Naive thymus-derived CD4-positive, alpha-beta T cell (primary cell): ENCODE measurements at regions of chr6 and their contacts with region 1.

Region 1: DNA sequence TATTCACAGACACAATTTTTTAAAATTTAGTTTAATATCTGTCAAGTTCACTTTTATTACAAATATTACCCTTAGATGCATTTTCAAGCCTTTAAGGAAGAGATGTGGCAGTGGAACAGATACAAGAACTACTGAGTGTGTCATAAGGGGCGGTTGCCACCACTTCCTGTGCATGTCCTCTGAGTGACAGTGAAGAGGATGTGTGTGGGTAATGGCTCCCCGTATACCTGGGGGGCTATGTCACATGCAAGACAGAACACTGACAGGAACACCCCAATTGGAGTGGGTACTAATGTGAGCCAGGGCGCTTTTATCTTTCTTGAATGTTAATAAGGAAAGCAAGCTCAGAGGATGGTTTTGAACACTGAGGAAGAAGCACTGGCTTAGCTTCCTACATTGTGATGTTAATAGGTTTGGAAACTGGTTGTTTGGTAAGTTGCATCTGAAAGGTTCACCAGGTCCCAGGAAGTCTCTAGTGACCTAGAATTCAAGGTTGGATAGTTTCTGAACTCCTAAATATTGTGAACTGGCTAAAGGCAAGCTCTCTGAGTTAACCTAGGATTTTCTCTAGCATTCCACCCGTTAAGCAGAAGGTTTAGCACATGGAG is 83.4 kb upstream of the ASF1A start:
- DNase-seq: peak in 8 of 9 donors; percentile 35 to 80 (median 74)
- ATAC-seq: peak; percentile 93
- H3K4me3 ChIP-seq: peak overlapping the region; percentile 12
- H3K4me3 Mint-ChIP-seq: peak overlapping the region; percentile 54 to 87 (median 77)
- H3K27ac ChIP-seq: peak overlapping the region; percentile 45
- H3K27ac Mint-ChIP-seq: peak overlapping the region; percentile 85 to 97 (median 93)
- H3K4me1 ChIP-seq: peaks cover 23 to 31% of the 10 kb centered on the region in 2 donors
- H3K4me1 Mint-ChIP-seq: peaks cover 34 to 63% (median 51%) of the 10 kb centered on the region in 7 donors
- H3K27me3 ChIP-seq: no peaks in the 10 kb centered on the region
- H3K27me3 Mint-ChIP-seq: no peaks in the 10 kb centered on the region

Region 2: DNA sequence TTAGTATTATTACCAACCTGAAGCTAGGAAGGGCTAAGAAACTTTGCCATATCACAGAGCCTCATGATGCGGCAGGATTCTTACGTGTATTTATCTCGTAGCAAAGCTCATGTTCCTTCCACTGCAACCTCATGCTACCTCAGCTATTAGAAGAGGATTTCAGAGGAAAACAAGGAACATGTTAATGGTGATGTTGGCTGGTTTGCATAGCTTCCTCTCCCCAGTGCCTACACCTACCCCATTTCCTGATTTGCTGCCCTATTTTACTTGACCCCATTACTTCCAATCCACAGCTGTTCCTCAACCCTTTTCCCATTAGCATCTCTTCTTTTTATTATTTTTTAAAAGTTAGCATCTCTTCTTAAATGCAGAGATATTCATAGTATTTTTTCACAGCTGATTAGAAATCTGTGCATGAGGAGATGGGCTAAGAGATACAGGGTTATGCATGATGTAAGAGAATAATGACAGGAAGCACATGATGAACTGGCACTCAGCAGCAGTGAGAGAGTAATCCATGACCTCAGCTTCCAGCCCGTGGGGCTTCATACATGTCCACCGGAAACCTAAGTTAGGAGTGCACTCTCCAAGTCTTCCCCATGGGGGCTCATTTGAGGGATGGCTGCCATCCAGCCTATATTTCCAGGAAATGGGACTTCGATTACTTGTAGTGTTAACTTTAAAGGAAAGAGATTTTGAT is 22.6 kb before region 1 on chr6:
- CTCF ChIA-PET with region 1: no interaction called
- POLR2A ChIA-PET with region 1: no interaction called
- intact Hi-C with region 1: no loop called
- DNase-seq: peak in 1 of 9 donors; percentile 26
- ATAC-seq: peak; percentile 85
- H3K4me3 ChIP-seq: no peak overlapping the region
- H3K4me3 Mint-ChIP-seq: peak overlapping the region in 4 of 10 donors; percentile 1 to 51 (median 33)
- H3K27ac ChIP-seq: no peak overlapping the region
- H3K27ac Mint-ChIP-seq: peak overlapping the region; percentile 44 to 89 (median 78)
- H3K4me1 ChIP-seq: peaks cover 12% of the 10 kb centered on the region in 2 donors
- H3K4me1 Mint-ChIP-seq: peaks cover 11 to 29% (median 25%) of the 10 kb centered on the region in 7 donors
- H3K27me3 ChIP-seq: no peaks in the 10 kb centered on the region
- H3K27me3 Mint-ChIP-seq: peaks cover 0 to 1% (median 0%) of the 10 kb centered on the region in 5 donors

Region 3: DNA sequence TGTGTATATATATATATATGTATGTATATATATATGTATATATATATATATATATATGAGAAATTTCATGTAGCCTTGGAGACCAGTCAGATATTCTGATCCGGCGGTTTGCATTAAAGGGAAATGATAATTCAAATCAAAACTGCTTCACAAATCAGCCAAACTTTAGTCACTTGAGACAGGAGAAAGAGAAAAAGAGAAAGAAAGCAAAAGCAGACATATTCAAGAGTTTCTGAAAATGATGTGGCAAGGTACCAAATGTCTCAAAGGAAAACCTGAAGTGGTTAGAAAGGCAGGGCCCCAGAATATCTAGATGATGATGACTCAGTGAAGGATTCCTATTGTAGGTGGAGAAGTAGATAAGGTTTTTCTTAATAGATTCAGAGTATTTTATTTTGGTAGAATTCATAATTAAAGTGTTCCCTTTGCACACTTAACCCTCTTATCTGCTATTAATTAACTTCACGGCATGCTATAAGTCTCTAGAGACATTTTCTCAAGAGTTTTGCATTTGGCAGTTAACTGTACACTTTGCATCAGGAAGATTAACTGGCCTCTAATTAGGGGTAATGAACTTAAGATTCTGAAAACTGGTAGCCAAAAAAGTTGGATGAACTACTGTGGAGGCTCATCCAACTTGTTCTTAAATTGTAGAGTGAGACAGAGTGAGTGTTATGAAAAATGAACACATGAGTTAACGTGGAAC is 33.3 kb after region 1 on chr6:
- CTCF ChIA-PET with region 1: interaction called, 5 read pairs
- POLR2A ChIA-PET with region 1: no interaction called
- intact Hi-C with region 1: loop called in 1 of 2 experiments (anchors 5 kb)
- DNase-seq: no peak
- ATAC-seq: no peak
- H3K4me3 ChIP-seq: no peak overlapping the region
- H3K4me3 Mint-ChIP-seq: peak overlapping the region in 1 of 10 donors; percentile 4
- H3K27ac ChIP-seq: no peak overlapping the region
- H3K27ac Mint-ChIP-seq: peak overlapping the region in 1 of 9 donors; percentile 24
- H3K4me1 ChIP-seq: no peaks in the 10 kb centered on the region
- H3K4me1 Mint-ChIP-seq: peaks cover 7 to 20% (median 14%) of the 10 kb centered on the region in 7 donors
- H3K27me3 ChIP-seq: no peaks in the 10 kb centered on the region
- H3K27me3 Mint-ChIP-seq: no peaks in the 10 kb centered on the region

Region 4: DNA sequence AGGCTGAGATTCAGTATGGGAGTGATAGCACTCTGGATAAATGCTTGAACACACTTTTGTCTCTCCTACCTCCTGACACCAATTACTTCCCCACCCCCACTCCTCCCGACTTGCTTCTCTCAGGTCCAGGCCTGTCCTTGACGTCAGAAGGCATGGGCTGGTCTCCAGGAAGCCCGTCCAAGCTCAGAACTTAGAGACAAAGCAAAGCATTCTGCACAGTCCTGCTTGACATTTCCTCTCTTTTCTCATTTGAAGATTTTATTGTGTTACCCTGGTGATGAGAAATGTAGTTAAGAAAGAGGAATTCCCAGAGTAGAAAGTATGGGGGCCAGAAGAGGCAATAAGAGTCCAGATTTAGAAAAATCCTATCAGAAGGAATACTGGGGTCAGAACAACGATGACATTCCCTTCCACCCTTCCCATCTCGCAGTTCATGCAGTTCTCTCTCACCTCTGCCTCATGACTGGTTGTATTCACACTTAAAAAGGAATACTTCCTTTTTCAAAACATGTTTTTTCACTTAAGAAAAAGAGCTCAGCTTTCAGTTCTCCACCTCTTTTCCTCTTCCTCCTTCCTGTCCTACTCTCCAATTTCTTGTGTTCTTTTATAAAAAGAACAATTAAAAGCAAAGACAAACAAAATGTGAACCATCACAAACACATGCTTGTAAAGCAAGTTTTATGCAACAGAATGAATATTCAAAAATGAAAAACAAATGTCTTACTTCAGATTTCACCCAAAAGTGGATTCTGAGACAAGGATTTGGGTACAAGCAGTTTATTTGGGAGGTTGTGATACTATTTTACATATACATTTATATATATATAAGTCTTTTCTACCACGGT is 286.4 kb after region 1 on chr6:
- CTCF ChIA-PET with region 1: no interaction called
- POLR2A ChIA-PET with region 1: no interaction called
- intact Hi-C with region 1: no loop called
- DNase-seq: peak in 2 of 9 donors; percentile 10 to 25
- ATAC-seq: peak; percentile 16
- H3K4me3 ChIP-seq: no peak overlapping the region
- H3K4me3 Mint-ChIP-seq: peak overlapping the region in 8 of 10 donors; percentile 3 to 75 (median 64)
- H3K27ac ChIP-seq: peak overlapping the region; percentile 54
- H3K27ac Mint-ChIP-seq: peak overlapping the region in 8 of 9 donors; percentile 57 to 94 (median 87)
- H3K4me1 ChIP-seq: peaks cover 0 to 8% of the 10 kb centered on the region in 2 donors
- H3K4me1 Mint-ChIP-seq: peaks cover 6 to 31% (median 25%) of the 10 kb centered on the region in 7 donors
- H3K27me3 ChIP-seq: no peaks in the 10 kb centered on the region
- H3K27me3 Mint-ChIP-seq: peaks cover 0 to 2% (median 0%) of the 10 kb centered on the region in 5 donors